ENCODE measurements at regions of chr22 and their contacts with region 1.

Region 1: DNA sequence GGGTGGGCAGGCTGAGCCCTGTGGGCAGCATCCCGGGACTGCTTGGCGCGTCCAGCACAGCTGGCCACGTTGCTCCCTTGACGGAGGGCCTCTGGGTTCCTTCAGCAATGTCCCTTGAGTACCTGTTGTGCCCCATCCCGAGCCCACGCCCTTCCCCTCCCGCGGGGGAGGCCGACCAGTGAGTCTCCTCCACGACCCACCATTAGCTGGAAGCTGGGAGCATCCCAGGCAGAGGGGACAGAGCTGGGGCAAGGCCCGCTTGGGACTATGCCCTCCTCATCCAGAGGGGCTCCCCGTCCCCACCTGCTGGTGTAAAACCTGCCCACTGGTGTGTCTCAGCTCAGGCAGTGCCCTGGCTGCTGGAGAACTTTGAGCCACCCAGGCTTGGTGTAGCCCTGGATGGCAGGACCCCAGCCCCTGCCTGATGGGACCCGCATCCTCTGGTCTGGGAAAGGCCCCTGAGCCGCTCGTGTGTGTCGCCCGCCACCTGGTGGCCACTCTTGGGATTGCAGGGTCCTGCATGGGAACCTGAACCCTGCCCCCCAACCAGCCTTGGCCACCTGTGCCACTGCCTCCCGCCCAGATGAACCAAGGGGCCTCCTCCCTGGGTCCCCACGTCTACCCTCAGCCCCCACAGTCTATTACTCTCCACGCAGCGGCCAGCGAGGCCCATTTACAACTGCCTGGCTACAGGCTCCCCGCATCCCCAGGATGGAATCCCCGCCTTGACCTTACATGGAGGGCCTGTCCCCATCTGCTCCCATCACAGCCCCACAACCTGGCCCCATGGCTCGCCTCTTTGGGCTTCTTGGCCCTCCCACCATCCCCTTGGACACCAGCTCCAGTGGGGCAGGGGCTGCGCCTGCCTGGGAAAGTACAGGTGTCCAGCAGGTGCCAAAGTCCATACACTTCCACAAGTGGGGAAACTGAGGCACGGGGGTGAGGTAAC is 16.6 kb upstream of the ARHGAP8 start:
- DNase-seq: peak; percentile 60
- H3K4me3 ChIP-seq: no peak overlapping the region
- H3K27ac ChIP-seq: no peak overlapping the region
- H3K4me1 ChIP-seq: no peaks in the 10 kb centered on the region
- H3K27me3 ChIP-seq: no peaks in the 10 kb centered on the region
- CTCF ChIP-seq: peak; percentile 96 to 100 (median 98)
- POLR2A ChIP-seq: no peak

Region 2: DNA sequence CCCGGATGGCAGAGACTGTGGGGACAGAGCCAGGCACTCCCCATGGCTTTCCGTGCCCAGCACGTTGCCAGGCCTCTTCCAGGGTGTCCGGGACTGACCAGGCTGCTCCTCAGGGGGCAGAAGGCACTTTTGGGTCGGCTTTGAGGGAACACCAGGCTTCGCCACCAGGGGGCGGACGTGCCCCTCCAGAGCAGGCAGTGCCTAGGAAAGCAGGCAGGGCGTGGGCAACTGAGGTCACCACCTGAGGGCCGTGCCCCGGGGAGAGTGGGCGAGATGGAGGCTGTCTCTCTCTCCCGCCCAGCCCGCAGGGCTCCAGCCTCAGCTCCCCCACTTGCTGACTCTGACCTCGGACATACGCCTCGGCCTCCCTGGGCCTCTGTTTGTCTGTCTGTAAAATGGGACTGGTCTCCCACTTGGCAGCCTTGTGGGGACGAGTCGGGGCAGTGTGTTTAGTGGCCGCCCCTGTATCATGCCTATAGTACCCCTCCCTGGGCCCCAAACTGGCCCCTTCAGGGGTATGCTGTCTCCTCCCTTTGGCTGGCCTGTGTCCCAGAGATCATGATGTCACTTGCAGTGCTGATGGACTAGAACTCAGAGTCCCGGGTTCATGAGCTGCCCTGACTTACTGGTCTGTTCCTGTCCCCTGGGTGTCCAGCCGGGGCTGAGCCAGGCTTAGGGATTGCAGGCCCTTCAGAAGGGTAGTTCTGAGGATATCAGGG is 38.2 kb before region 1 on chr22:
- intact Hi-C with region 1: loop called (anchors 1 kb)
- DNase-seq: peak; percentile 70
- H3K4me3 ChIP-seq: no peak overlapping the region
- H3K27ac ChIP-seq: peak overlapping the region; percentile 67 to 71
- H3K4me1 ChIP-seq: peaks cover 12% of the 10 kb centered on the region
- H3K27me3 ChIP-seq: no peaks in the 10 kb centered on the region
- CTCF ChIP-seq: peak; percentile 89 to 97 (median 94)
- POLR2A ChIP-seq: no peak

Measured in prostate gland (tissue), 2 donors.